ENCODE measurements at regions of chr22 and their contacts with region 1.

Region 1: DNA sequence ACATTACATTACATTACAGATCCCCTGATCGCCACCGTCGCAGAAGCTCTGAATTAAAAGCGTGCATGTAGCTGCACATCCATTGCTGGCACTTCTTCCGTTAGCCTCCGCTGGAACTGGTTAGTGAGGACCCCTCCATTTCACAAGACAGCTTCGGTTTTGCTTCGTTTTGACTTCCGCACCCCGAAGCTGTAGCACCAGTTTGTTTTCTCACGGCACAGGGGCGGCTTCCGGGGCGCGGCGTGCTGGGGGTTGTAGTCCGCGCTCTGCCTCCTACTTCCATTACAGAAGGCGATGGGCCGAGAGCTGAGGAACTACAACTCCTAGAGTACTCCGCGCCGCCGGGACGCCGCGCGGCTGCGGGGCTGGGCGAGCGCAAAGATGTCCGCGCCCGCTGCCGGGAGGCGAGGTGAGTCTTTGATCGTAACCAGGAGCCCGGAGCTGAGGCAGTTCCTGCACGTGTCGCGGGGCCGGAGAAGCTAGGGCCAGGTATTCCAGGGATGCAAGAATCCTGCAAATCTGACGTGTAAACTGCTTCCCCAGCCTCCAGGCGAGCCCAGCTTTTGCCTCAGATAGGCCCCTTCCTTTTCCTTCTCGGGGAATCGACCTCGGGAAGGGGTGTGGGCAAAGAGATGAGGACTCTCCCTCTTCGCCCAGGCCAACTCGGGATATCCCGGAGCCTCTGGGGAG is at the start of gene PEX26:
- DNase-seq: peak; percentile 93
- ATAC-seq: peak; percentile 99
- H3K4me3 Mint-ChIP-seq: peak within 1 kb of the TSS; percentile 97
- H3K27ac Mint-ChIP-seq: peak within 1 kb of the TSS; percentile 97
- H3K4me1 Mint-ChIP-seq: peaks cover 16% of the 10 kb centered on the region
- H3K27me3 Mint-ChIP-seq: no peaks in the 10 kb centered on the region
- CTCF ChIP-seq: no peak
- total RNA-seq, gene PEX26: 43.0 to 52.3 TPM (median 44.8 TPM) in 3 replicates

Region 2: DNA sequence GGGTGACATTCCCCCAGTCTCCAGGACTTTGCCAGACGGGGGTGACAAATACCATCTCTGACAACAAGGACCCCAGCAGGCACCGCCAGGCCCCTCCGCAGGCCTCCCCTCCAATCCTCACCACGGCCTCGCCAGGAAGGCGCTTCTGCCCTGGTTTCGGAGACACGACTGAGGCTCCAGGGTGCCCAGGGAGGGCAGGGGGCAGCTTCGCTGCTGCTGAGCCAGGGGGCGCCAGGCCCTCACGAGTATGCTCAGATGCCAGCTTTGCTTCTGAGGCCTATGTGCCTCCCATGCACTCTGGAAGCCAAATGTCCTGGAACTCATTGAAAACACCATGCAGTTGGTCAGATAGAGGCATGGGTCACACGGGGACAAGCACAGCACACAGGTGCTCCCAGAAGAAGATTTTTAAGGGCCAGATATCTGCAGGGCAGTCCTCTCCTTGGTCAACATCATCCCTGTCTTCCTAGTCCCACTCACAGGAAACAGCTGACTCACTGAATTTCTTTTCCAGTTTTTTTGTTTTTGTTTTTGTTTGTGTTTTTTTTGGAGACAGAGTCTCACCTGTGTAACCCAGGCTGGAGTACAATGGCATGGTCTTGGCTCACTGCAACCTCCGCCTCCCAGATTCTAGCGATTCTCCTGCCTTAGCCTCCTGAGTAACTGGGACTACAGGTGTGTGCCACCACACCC is 323.4 kb before region 1 on chr22:
- CTCF ChIA-PET with region 1: interaction called, 21 read pairs
- POLR2A ChIA-PET with region 1: no interaction called
- DNase-seq: peak; percentile 59
- ATAC-seq: peak; percentile 81
- H3K4me3 Mint-ChIP-seq: no peak overlapping the region
- H3K27ac Mint-ChIP-seq: no peak overlapping the region
- H3K4me1 Mint-ChIP-seq: no peaks in the 10 kb centered on the region
- H3K27me3 Mint-ChIP-seq: no peaks in the 10 kb centered on the region
- CTCF ChIP-seq: peak; percentile 37; the same call in 1 of the 2 replicates

Region 3: DNA sequence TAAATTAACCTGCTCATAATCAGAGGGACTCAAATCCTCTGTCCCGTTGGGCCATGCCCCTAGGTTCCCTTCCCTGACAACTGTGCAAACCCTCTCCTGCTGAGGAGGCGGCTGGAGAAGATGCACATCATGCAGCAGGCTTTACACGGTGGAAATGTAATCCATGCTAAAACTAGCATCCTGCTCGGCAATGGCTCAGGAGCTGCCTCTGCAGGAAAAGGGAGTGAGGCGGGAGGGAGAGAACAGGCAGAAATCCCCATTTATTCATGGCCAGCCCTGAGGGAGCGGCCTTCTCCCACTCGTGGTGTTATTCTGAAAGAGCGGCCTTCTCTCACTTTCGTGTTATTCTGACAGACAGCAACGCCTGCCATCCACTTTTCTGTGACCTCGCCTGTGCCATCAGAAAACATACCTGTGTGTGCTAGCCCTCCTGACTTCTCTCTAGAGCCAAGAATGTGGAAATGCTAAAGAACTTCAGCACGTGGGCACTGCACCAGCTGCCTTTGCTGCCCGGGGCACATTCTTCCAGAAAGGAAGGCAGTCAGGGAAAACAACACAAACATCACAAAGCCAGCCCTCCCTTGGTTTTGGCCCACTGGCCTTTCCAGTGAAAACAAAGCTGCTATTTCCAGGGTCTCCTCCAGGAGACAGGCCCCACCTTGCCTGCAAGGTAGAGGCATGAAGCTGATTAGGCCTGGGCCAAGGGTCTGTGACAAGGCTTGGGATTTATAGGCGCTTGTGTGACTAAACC is 240.6 kb before region 1 on chr22:
- CTCF ChIA-PET with region 1: interaction called, 15 read pairs
- POLR2A ChIA-PET with region 1: no interaction called
- DNase-seq: no peak
- ATAC-seq: peak; percentile 87
- H3K4me3 Mint-ChIP-seq: no peak overlapping the region
- H3K27ac Mint-ChIP-seq: peak overlapping the region; percentile 72; the same call in 1 of the 2 replicates
- H3K4me1 Mint-ChIP-seq: peaks cover 3% of the 10 kb centered on the region
- H3K27me3 Mint-ChIP-seq: no peaks in the 10 kb centered on the region
- CTCF ChIP-seq: no peak

Region 4: GRCh38 chr22:17897426-17897825 is 180.4 kb before region 1 on chr22:
- CTCF ChIA-PET with region 1: interaction called, 107 read pairs
- POLR2A ChIA-PET with region 1: no interaction called
- DNase-seq: no peak
- ATAC-seq: no peak
- H3K4me3 Mint-ChIP-seq: no peak overlapping the region
- H3K27ac Mint-ChIP-seq: peak overlapping the region; percentile 38
- H3K4me1 Mint-ChIP-seq: no peaks in the 10 kb centered on the region
- H3K27me3 Mint-ChIP-seq: no peaks in the 10 kb centered on the region
- CTCF ChIP-seq: no peak

Region 5: DNA sequence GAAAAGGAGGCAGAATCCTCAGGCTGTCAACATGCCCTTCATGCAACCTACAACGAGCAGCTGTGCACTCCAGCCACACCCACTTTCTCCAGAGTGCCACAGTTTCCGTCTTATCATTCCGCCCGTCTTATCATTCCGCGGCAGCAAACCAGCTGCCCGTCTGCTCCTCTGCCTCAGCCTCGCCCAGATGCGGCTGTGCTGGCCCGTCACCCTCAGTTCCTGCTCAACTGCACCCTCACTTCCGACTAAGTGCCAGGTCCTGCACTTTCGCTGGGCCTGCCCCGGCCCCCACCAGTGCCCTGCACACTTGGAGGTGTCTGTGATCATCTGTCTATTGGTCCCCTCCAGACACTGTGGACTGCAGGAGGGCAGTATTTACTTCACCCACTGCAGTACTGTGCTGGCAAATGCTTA is 97.1 kb before region 1 on chr22:
- CTCF ChIA-PET with region 1: interaction called, 13 read pairs
- POLR2A ChIA-PET with region 1: no interaction called
- DNase-seq: no peak
- ATAC-seq: no peak; the same call in 1 of the 2 replicates
- H3K4me3 Mint-ChIP-seq: peak overlapping the region; percentile 6; the same call in 1 of the 2 replicates
- H3K27ac Mint-ChIP-seq: peak overlapping the region; percentile 64
- H3K4me1 Mint-ChIP-seq: peaks cover 37% of the 10 kb centered on the region
- H3K27me3 Mint-ChIP-seq: no peaks in the 10 kb centered on the region
- CTCF ChIP-seq: no peak

Region 6: DNA sequence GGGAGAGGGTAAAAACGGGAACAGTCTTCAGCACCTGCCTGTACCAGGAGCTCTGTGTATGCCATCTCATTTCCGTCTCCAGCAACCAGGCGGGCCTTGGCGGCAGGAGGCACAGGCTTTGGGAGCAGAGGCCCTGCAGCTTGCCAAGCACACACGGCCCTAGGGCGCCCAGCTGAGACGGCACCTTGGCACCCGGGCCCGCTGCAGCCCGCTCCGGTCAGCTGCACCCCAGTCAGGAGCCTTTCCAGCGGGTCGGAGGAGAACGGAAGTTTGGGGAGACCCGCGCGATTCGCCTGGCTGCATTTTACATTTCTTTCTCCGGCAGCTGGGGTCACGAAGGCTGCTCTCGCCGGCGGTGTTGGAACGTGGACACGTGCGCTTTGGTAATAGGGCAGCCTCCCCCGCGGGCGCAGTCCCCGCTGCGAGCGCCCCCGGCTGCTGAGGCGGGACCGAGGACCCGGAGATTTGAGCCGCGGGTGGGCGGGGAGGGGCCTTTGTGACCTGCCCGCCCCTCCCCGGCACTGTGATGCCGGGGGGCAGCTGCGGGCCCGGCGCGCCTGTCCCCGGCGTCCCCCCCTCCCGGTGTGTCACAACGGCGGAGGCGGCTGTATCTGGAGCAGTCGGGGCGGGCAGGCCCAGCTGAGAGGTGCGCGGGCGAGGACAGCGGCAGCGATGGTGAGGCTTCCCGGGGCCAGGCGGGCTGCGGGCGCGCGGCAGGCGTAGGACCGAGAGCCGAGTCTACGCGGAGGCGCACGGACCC is 32.6 kb after region 1 on chr22 and contains the start of gene TUBA8:
- CTCF ChIA-PET with region 1: interaction called, 10 read pairs
- POLR2A ChIA-PET with region 1: interaction called, 3 read pairs
- DNase-seq: peak; percentile 66
- ATAC-seq: peak; percentile 77
- H3K4me3 Mint-ChIP-seq: peak within 1 kb of the TSS; percentile 63
- H3K27ac Mint-ChIP-seq: no peak within 1 kb of the TSS
- H3K4me1 Mint-ChIP-seq: peaks cover 11% of the 10 kb centered on the region
- H3K27me3 Mint-ChIP-seq: peaks cover 57% of the 10 kb centered on the region
- CTCF ChIP-seq: no peak
- total RNA-seq, gene TUBA8: 0.50 to 1.3 TPM (median 0.72 TPM) in 3 replicates